ENCODE measurements at regions of chr22 and their contacts with region 1.

Region 1: GRCh38 chr22:18929459-18929858 is 6.6 kb downstream of the PRODH start:
- DNase-seq: no peak
- ATAC-seq: no peak
- H3K4me3 ChIP-seq: no peak overlapping the region
- H3K27ac ChIP-seq: no peak overlapping the region
- H3K4me1 ChIP-seq: no peaks in the 10 kb centered on the region
- H3K27me3 ChIP-seq: no peaks in the 10 kb centered on the region
- CTCF ChIP-seq: no peak

Region 2: DNA sequence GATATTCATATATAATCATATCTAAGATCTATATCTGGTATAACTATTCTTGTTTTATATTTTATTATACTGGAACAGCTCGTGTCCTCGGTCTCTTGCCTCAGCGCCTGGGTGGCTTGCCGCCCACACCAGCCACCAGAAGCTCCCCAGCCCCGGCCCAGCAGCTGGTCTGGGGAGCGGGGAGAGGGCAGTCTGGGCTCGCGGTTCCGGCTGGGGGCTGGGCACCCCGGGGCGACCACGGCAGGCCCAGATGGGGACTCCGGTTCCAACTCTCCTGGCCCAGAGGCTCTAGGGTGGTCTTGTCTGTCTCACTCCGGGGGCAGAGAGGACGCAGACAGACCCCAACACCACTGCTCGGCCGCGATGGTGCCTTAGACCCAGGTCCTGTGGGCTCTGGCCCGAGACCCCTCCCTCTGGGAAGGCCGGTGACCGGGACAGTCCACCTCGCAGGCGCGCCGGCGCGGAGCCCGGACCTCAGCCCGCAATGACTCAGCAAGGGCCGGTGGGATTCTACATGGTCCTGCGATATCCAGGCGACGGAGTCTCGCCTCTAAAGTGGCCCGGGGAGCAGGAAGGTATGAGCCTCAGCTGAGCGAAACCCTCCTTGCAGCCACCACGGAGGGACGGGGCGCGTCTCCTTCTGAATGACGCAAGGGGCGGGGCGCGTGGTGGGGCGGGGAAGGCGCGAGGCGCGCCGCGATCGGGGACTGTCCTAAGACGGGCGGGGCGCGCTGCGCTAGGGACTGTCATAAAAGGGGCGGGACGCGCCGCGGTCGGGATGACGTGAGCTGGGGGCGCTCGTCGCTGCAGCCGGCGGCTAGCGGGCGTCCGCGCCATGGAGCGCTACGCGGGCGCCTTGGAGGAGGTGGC is 23.7 kb before region 1 on chr22 and contains the start of gene DGCR6:
- CTCF ChIA-PET with region 1: no interaction called
- POLR2A ChIA-PET with region 1: no interaction called
- intact Hi-C with region 1: no loop called
- DNase-seq: no peak
- ATAC-seq: peak; percentile 98
- H3K4me3 ChIP-seq: no peak within 1 kb of the TSS
- H3K27ac ChIP-seq: no peak within 1 kb of the TSS
- H3K4me1 ChIP-seq: no peaks in the 10 kb centered on the region
- H3K27me3 ChIP-seq: no peaks in the 10 kb centered on the region
- CTCF ChIP-seq: no peak
- total RNA-seq, gene DGCR6: 0.86 and 3.4 TPM in 2 replicates

Region 3: GRCh38 chr22:18970176-18970947 is 40.9 kb after region 1 on chr22:
- CTCF ChIA-PET with region 1: no interaction called
- POLR2A ChIA-PET with region 1: no interaction called
- intact Hi-C with region 1: no loop called
- DNase-seq: no peak
- ATAC-seq: peak; percentile 62
- H3K4me3 ChIP-seq: peak overlapping the region; percentile 70
- H3K27ac ChIP-seq: no peak overlapping the region
- H3K4me1 ChIP-seq: no peaks in the 10 kb centered on the region
- H3K27me3 ChIP-seq: no peaks in the 10 kb centered on the region
- CTCF ChIP-seq: no peak

Region 4: DNA sequence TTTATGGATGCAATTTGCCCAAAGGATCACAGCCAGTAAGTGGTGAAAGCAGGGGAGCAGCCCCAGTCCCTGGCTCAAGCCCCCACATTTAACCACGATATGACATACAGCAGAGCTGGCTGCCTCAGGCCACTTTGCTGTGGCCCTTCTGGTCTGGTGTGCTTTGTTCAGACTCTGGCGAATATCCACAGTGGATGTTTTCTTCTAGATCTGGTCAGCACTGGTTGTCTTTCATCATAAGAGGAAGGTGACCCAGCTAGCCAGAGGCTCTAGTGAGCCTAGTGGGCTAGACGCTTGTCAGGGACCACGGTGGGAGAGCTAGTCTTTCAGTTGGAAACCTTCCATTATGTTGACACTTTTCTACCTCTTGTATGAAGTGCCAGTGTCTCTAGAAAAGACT is 150.2 kb after region 1 on chr22:
- CTCF ChIA-PET with region 1: interaction called, 11 read pairs
- POLR2A ChIA-PET with region 1: no interaction called
- intact Hi-C with region 1: no loop called
- DNase-seq: no peak
- ATAC-seq: no peak
- H3K4me3 ChIP-seq: no peak overlapping the region
- H3K27ac ChIP-seq: no peak overlapping the region
- H3K4me1 ChIP-seq: no peaks in the 10 kb centered on the region
- H3K27me3 ChIP-seq: no peaks in the 10 kb centered on the region
- CTCF ChIP-seq: no peak